ENCODE measurements at regions of chr1 and their contacts with region 1.

Region 1: DNA sequence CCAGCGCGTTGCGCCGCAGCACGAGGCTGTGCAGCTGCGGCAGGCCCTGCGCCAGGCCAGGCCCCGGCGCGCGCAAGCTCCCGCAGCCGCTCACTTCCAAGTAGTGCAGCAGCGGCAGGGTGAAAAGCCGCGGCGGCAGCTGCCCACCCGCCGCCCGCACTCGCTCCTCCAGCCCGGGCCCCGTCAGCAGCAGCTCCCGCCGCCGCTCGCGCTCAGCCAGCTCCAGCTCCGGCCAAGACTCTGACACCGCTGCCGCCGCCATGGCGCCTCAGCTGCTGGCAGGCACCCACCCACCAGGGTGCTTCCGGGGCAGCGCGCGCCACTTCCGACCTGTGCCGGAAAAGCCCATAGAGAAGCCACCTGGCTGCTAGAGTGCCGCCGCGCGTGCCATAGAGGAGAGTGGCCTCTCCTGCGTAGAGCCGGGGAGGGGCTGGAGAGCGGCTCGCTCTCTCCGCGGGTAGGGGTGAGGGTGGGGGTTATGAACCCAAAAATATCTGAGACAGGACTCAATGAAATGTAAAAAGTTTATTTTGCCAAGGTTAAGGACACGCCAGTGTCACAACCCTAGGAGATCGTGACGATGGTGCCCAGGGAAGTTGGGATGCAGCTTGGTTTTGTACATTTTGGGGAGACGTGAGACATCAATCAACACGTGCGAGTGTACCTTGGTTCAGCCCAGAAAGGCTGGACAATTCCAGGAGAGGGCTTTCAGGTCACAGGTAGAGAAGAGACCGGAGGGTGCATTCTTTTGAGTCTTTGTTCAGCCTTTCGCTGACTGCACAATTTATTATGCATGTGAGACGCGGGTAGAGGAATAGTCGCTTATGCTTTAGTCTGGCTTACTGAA is at the start of gene LRRC47:
- DNase-seq: peak; percentile 59 to 92
- H3K4me3 ChIP-seq: peak within 1 kb of the TSS; percentile 67 to 85 (median 78)
- H3K27ac ChIP-seq: peak within 1 kb of the TSS; percentile 47; the same call in 1 of the 2 replicates
- H3K4me1 ChIP-seq: peaks cover 6 to 19% (median 12%) of the 10 kb centered on the region in 4 experiments
- H3K27me3 ChIP-seq: no peaks in the 10 kb centered on the region; a peak in 2 of 7 replicates
- CTCF ChIP-seq: no peak; a peak in 1 of 4 replicates
- EP300 ChIP-seq: peak in 1 of 2 experiments; percentile 62; a peak in 1 of 3 replicates
- POLR2A ChIP-seq: peak; percentile 50 to 72
- RAD21 ChIP-seq: no peak
- total RNA-seq, gene LRRC47: 82.4 and 82.5 TPM in 2 replicates

Region 2: GRCh38 chr1:3772027-3772714 is 24.3 kb before region 1 on chr1:
- CTCF ChIA-PET with region 1: interaction called, 15 read pairs
- POLR2A ChIA-PET with region 1: interaction called, 84 read pairs
- DNase-seq: peak; percentile 77 to 94
- H3K4me3 ChIP-seq: peak overlapping the region; percentile 52 to 81 (median 56)
- H3K27ac ChIP-seq: no peak overlapping the region
- H3K4me1 ChIP-seq: peaks cover 0 to 35% (median 13%) of the 10 kb centered on the region in 4 experiments; a peak in 6 of 7 replicates
- H3K27me3 ChIP-seq: no peaks in the 10 kb centered on the region; a peak in 1 of 7 replicates
- CTCF ChIP-seq: no peak
- EP300 ChIP-seq: no peak
- POLR2A ChIP-seq: peak in 1 of 2 experiments; percentile 44; a peak in 1 of 3 replicates
- RAD21 ChIP-seq: no peak

Region 3: DNA sequence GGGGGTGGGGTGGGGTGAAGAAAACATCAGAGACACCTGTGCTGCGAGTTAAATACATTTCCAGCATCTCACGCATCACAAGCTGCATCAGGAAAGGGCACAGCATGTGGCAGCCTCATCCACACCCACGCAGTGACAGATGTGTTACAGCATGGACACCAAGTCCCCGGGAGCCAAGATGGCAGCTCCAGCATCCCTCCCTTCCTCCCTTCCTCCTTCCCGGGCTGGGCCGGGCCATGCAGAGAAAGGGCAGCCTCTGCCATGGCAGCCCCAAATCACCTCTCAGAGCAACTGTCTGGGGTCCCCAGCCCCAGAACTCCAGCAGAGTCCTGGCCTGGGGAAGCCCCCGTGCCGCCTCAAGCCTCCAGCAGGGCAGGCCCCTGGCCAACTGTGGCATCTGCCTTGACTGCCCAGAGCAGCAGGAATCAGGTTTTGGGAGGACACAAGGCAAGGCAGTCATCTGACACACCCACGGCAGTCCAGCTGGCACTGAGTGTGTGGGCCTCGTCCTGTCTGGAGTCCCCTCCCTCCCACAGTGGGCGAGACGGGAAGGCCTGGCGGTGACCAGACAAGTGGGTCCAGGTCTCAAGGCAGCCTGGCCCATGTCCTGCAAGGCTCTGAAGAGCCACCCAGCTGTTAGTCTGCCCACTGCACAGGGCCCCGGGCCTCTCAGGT is 17.7 kb before region 1 on chr1:
- CTCF ChIA-PET with region 1: interaction called, 40 read pairs
- POLR2A ChIA-PET with region 1: interaction called, 84 read pairs
- DNase-seq: no peak
- H3K4me3 ChIP-seq: no peak overlapping the region
- H3K27ac ChIP-seq: no peak overlapping the region
- H3K4me1 ChIP-seq: peaks cover 0 to 21% (median 9%) of the 10 kb centered on the region in 4 experiments; a peak in 6 of 7 replicates
- H3K27me3 ChIP-seq: no peaks in the 10 kb centered on the region; a peak in 1 of 7 replicates
- CTCF ChIP-seq: no peak
- EP300 ChIP-seq: no peak
- POLR2A ChIP-seq: no peak
- RAD21 ChIP-seq: no peak

Region 4: GRCh38 chr1:3785456-3786157 is 10.8 kb before region 1 on chr1:
- CTCF ChIA-PET with region 1: interaction called, 40 read pairs
- POLR2A ChIA-PET with region 1: interaction called, 84 read pairs
- DNase-seq: peak in 1 of 2 experiments; percentile 84
- H3K4me3 ChIP-seq: no peak overlapping the region
- H3K27ac ChIP-seq: no peak overlapping the region
- H3K4me1 ChIP-seq: peaks cover 0 to 13% (median 10%) of the 10 kb centered on the region in 4 experiments; a peak in 5 of 7 replicates
- H3K27me3 ChIP-seq: no peaks in the 10 kb centered on the region
- CTCF ChIP-seq: peak; percentile 76 to 88 (median 87)
- EP300 ChIP-seq: no peak
- POLR2A ChIP-seq: no peak
- RAD21 ChIP-seq: peak; percentile 87 to 90

Region 5: DNA sequence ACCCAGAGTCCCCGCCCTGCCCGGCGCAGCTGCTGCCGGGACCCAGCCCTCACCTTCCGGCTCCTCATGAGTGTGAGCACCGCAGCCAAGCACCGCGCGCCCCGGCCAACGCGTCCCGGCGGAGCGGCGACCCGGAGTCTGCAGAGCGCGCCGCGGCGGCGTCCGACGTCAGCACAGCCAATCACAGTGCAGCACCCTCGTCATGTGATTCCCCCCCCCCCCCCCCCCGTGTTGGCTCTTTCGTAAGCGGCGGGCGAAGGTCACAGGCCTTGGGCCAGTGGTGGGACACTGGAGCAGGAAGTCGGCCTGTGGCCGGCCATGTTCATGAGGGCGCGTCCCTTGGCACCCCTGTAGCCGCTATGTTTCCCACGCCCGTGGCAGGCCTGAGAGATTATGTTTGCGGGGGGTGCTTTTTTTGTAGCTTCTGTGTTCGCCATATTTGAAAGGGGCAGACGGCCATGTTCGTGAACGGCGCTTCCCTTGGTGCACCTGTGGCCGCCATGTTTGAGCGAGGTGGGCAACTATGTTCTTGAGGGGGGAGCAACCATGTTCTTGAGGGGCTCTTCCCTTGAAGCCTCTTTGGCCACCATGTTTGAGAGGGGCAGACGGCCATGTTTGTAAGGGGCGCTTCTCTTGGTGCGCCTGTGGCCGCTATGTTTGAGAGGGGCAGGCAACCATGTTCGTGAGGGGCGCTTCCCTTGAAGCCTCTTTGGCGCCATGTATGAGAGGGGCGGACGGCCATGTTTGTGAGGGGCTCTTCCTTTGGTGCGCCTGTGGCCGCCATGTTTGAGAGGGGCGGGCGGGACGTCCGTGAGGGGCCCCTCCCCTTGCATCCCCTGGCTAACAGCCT is 103.9 kb after region 1 on chr1 and contains the start of gene C1orf174:
- CTCF ChIA-PET with region 1: interaction called, 4 read pairs
- POLR2A ChIA-PET with region 1: interaction called, 29 read pairs
- DNase-seq: peak; percentile 90 to 97
- H3K4me3 ChIP-seq: peak within 1 kb of the TSS; percentile 78 to 92 (median 84)
- H3K27ac ChIP-seq: peak within 1 kb of the TSS; percentile 98
- H3K4me1 ChIP-seq: peaks cover 0 to 12% (median 3%) of the 10 kb centered on the region in 4 experiments; a peak in 1 of 7 replicates
- H3K27me3 ChIP-seq: no peaks in the 10 kb centered on the region
- CTCF ChIP-seq: no peak
- EP300 ChIP-seq: no peak
- POLR2A ChIP-seq: peak; percentile 63 to 70; a peak in 2 of 3 replicates
- RAD21 ChIP-seq: no peak
- total RNA-seq, gene C1orf174: 28.4 and 28.5 TPM in 2 replicates